Naive thymus-derived CD4-positive, alpha-beta T cell (primary cell): ENCODE measurements at regions of chr2 and their contacts with region 1.

Region 1: DNA sequence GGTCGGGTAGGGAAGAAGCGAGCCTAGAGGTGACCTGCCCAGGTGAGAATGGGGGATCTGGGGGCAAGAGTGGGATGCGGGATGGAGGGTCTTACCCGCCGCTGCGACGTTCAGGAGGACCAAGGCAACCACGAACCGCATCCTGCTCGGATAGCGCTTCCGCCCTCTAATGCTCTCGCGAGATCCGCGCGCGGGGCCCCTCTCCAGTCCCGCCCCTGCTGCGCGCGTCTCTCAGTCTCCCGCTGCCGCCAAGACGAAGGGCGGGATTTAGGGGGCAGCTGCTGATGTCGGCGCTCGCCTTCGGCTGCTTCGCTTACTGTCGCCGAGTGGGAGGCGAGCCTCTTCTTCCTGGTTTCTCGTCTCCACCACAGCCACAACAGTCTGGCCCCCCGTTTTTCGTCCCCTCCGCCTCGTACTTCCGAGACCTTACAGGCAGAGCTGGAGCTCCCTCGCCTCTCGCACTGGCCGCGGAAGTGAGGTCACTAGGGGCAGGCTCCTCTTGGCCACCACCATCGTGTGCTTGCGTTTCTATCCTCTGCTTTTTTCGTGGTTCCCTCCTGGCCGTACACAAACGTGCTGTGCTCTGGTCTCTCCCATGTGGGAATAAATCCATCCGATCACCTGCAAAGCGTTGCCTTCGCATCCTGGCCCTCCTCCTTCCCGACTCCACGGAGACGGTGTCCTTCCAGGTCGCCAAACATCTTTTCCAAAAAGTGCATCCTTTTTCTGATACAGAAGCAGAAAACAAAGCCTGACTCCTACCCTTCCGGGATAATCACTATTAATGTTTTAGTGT is at the start of gene TGOLN2:
- DNase-seq: peak; percentile 91 to 96 (median 95)
- ATAC-seq: peak; percentile 94
- H3K4me3 ChIP-seq: peak within 1 kb of the TSS; percentile 84
- H3K4me3 Mint-ChIP-seq: peak within 1 kb of the TSS; percentile 97 to 100 (median 99)
- H3K27ac ChIP-seq: peak within 1 kb of the TSS; percentile 92
- H3K27ac Mint-ChIP-seq: peak within 1 kb of the TSS; percentile 97 to 100 (median 99)
- H3K4me1 ChIP-seq: peaks cover 24 to 31% of the 10 kb centered on the region in 2 donors
- H3K4me1 Mint-ChIP-seq: peaks cover 31 to 51% (median 46%) of the 10 kb centered on the region in 7 donors
- H3K27me3 ChIP-seq: no peaks in the 10 kb centered on the region
- H3K27me3 Mint-ChIP-seq: no peaks in the 10 kb centered on the region
- total RNA-seq, gene TGOLN2: 144 to 200 (median 178) TPM

Region 2: DNA sequence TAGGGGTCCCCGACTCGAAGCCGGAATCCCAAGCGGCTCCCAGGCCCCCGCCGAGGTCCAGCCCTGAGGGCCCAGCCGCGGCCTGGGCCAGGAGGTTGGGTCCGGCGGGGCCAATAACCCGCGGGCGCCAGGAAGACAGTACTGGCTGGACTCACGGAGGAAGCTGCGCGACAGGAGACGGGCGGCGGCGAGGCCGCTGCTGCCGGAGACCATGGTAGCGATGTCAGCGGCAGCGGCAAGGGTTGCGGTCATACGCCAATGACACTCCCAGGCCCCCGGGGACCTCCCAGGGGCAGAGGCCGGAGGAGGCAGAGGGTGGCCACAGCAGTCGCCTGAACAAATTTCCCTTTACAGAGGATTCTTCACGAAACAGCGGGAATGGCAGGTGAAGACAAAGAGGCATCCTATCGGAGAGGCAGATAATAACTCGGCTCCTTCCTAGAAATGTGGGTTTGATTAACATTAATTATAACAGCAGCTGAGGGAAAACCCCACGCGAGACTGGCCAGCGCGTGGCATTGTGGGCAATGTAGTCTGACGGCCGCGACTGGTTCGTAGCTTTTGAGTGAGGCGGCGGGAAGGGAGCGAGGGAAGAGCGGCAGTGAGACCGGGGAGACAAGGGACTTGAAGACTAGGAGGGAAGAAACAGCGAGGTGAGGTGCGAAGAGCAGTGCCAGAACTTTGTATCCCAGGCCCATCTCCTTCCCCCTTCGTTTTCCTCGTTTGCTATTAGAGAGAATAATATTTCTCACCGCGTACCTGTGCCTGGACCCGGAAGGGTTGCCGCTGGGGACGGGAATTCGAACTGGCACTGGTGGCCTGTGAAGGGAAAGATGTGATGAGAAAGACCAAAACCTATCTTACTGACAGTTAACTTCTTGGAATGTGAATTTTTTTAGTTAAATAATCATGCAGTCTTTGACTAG is 868.7 kb before region 1 on chr2 and contains the start of gene SUCLG1:
- CTCF ChIA-PET with region 1: no interaction called
- POLR2A ChIA-PET with region 1: no interaction called
- intact Hi-C with region 1: loop called in 1 of 2 experiments (anchors 1 kb)
- DNase-seq: peak; percentile 72 to 88 (median 84)
- ATAC-seq: peak; percentile 98
- H3K4me3 ChIP-seq: peak within 1 kb of the TSS; percentile 69
- H3K4me3 Mint-ChIP-seq: peak within 1 kb of the TSS; percentile 90 to 100 (median 96)
- H3K27ac ChIP-seq: peak within 1 kb of the TSS; percentile 94
- H3K27ac Mint-ChIP-seq: peak within 1 kb of the TSS; percentile 91 to 99 (median 99)
- H3K4me1 ChIP-seq: peaks cover 9 to 24% of the 10 kb centered on the region in 2 donors
- H3K4me1 Mint-ChIP-seq: peaks cover 33 to 56% (median 50%) of the 10 kb centered on the region in 7 donors
- H3K27me3 ChIP-seq: no peaks in the 10 kb centered on the region
- H3K27me3 Mint-ChIP-seq: no peaks in the 10 kb centered on the region
- total RNA-seq, gene SUCLG1: 45.1 to 63.6 (median 47.9) TPM

Region 3: DNA sequence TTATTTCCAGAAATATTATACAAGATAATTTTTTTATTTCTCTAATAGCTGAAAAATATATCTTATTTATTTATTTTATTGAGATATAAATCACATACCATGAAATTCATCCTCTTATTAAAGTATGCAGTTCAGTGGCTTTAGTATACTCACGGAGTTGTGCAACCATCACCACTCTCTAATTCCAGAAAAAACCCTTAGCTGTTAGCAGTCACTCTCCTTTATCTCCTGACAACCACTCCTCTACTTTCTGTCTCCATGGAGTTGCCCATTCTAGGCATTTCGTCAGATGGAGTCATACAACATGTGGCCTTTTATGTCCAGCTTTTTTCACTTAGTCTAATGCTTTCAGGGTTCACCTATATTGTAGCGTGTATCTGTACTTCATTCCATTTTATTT is 128.3 kb before region 1 on chr2:
- CTCF ChIA-PET with region 1: no interaction called
- POLR2A ChIA-PET with region 1: no interaction called
- intact Hi-C with region 1: no loop called
- DNase-seq: no peak
- ATAC-seq: no peak
- H3K4me3 ChIP-seq: no peak overlapping the region
- H3K4me3 Mint-ChIP-seq: no peak overlapping the region
- H3K27ac ChIP-seq: no peak overlapping the region
- H3K27ac Mint-ChIP-seq: no peak overlapping the region
- H3K4me1 ChIP-seq: no peaks in the 10 kb centered on the region
- H3K4me1 Mint-ChIP-seq: no peaks in the 10 kb centered on the region
- H3K27me3 ChIP-seq: no peaks in the 10 kb centered on the region
- H3K27me3 Mint-ChIP-seq: peaks cover 0 to 15% (median 8%) of the 10 kb centered on the region in 5 donors

Region 4: DNA sequence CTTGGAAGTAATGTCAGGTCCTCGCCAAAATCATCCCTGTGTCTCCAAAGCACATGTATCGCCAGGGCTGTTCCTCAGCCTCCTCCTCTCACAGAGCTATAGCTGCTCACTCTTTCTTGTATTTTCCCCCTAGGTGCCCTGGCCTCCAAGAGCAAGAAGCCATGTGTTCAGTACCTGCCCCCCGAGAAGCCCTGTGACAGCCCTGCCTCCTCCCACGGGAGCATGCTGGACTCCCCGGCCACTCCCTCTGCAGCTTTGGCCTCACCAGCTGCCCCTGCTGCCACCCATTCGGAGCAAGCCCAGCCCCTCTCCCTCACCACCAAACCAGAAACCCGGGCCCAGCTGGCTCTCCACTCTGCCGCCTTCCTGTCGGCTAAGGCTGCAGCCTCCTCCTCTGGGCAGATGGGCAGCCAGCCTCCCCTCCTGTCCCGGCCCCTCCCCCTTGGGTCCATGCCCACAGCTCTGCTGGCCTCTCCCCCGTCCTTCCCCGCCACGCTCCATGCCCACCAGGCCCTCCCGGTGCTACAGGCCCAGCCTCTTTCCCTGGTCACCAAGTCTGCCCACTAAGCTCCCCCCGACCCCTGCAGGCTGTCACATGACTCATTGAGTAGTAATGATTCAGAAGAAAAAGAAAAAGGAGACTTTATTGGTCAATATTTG is 19.0 kb before region 1 on chr2:
- CTCF ChIA-PET with region 1: interaction called, 6 read pairs
- POLR2A ChIA-PET with region 1: interaction called, 220 read pairs
- intact Hi-C with region 1: loop called in 1 of 2 experiments (anchors 1 kb)
- DNase-seq: peak in 2 of 9 donors; percentile 16 to 18
- ATAC-seq: peak; percentile 8
- H3K4me3 ChIP-seq: peak overlapping the region; percentile 57
- H3K4me3 Mint-ChIP-seq: peak overlapping the region; percentile 23 to 93 (median 86)
- H3K27ac ChIP-seq: peak overlapping the region; percentile 67
- H3K27ac Mint-ChIP-seq: peak overlapping the region; percentile 43 to 98 (median 95)
- H3K4me1 ChIP-seq: peaks cover 11 to 31% of the 10 kb centered on the region in 2 donors
- H3K4me1 Mint-ChIP-seq: peaks cover 26 to 56% (median 48%) of the 10 kb centered on the region in 7 donors
- H3K27me3 ChIP-seq: no peaks in the 10 kb centered on the region
- H3K27me3 Mint-ChIP-seq: peaks cover 0 to 8% (median 0%) of the 10 kb centered on the region in 5 donors

Region 5: DNA sequence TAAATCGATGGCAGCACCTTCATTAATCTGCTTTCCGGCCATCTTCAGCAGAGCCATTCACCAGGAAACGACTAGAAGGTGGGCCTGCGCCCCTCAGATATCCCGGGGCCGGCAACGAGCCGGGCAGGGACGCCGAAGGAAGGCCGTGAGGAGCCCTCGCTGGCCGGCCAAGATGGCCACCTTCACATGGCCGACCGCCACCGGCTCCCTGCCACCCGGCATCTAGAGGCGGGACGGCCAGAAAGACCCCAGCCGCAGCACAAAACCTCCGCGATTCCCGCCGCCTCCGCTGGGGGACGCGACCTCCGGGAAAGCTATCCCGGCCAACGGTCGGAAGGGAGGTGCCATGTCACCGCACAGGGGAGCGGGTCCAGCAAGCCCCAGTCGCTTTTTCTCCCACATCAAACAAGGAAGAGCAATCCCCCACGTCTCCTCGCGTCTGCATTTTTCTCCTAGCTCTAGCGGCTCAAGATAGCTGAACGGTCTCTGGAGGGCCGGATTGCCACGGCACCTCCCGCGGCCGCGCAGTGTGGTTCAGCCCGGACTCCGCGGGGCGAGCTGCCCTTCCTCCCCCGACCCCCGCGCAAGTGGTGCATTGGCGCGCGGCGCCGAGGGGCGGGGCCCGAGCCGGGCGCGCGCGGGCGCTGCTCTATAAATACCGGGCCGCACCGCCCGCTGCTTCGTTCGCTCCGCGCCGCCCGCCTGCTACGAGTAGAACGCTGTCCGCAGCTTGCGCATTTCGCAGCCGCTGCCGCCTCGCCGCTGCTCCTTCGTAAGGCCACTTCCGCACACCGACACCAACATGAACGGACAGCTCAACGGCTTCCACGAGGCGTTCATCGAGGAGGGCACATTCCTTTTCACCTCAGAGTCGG is 210.7 kb after region 1 on chr2 and contains the start of gene MAT2A:
- CTCF ChIA-PET with region 1: interaction called, 3 read pairs
- POLR2A ChIA-PET with region 1: interaction called, 52 read pairs
- intact Hi-C with region 1: loop called (anchors 1 kb)
- DNase-seq: peak; percentile 72 to 96 (median 88)
- ATAC-seq: peak; percentile 87
- H3K4me3 ChIP-seq: peak within 1 kb of the TSS; percentile 92
- H3K4me3 Mint-ChIP-seq: peak within 1 kb of the TSS; percentile 91 to 98 (median 95)
- H3K27ac ChIP-seq: peak within 1 kb of the TSS; percentile 84
- H3K27ac Mint-ChIP-seq: peak within 1 kb of the TSS; percentile 90 to 97 (median 94)
- H3K4me1 ChIP-seq: peaks cover 19 to 27% of the 10 kb centered on the region in 2 donors
- H3K4me1 Mint-ChIP-seq: peaks cover 14 to 58% (median 47%) of the 10 kb centered on the region in 7 donors
- H3K27me3 ChIP-seq: no peaks in the 10 kb centered on the region
- H3K27me3 Mint-ChIP-seq: no peaks in the 10 kb centered on the region
- total RNA-seq, gene MAT2A: 96.3 to 268 (median 178) TPM

Region 6: DNA sequence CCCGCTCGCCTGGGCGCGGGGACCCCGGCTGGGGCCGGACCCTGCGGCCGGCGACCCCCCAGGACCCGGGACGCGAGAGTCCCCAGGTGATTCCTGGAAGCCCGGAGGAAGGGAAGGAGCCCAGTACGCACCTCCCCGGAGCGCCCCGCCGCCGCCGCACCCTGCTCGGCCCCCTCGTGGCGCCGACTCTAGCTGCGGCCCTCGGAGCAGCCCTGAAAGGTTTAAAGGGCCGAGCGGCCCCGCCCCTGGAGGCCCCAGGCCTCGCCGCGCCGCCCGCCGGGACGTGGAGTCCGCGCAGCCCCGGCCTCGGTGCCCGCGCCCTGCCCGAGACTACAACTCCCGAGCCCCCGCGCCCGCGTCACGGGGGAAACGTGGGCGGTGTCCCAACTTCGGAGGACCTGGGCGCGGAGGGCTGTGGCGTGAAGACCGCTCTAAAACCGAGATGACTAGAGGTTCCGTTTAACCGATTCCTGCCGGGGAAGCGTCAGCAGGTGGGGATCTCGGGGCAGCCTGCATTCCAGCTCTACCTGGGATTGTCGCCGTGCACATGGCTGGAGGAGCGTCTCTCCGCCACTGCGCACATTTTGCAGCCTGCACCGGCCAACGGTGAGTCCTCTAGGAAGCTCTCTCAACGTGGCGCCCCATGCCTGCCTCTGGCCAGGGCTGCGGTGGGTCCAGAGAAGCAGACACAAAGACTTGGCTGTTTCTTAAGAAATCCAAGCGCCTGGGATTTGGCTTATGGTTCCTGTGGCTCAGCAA is 274.6 kb after region 1 on chr2 and contains the start of gene TMEM150A:
- CTCF ChIA-PET with region 1: no interaction called
- POLR2A ChIA-PET with region 1: no interaction called
- intact Hi-C with region 1: loop called in 1 of 2 experiments (anchors 2 kb)
- DNase-seq: peak; percentile 68 to 91 (median 78)
- ATAC-seq: peak; percentile 97
- H3K4me3 ChIP-seq: peak within 1 kb of the TSS; percentile 99
- H3K4me3 Mint-ChIP-seq: peak within 1 kb of the TSS; percentile 89 to 98 (median 91)
- H3K27ac ChIP-seq: peak within 1 kb of the TSS; percentile 81
- H3K27ac Mint-ChIP-seq: peak within 1 kb of the TSS; percentile 42 to 96 (median 82)
- H3K4me1 ChIP-seq: peaks cover 7 to 9% of the 10 kb centered on the region in 2 donors
- H3K4me1 Mint-ChIP-seq: peaks cover 16 to 45% (median 37%) of the 10 kb centered on the region in 7 donors
- H3K27me3 ChIP-seq: no peaks in the 10 kb centered on the region
- H3K27me3 Mint-ChIP-seq: peaks cover 0 to 2% (median 0%) of the 10 kb centered on the region in 5 donors
- total RNA-seq, gene TMEM150A: 5.1 to 17.8 (median 11.2) TPM

Region 7: DNA sequence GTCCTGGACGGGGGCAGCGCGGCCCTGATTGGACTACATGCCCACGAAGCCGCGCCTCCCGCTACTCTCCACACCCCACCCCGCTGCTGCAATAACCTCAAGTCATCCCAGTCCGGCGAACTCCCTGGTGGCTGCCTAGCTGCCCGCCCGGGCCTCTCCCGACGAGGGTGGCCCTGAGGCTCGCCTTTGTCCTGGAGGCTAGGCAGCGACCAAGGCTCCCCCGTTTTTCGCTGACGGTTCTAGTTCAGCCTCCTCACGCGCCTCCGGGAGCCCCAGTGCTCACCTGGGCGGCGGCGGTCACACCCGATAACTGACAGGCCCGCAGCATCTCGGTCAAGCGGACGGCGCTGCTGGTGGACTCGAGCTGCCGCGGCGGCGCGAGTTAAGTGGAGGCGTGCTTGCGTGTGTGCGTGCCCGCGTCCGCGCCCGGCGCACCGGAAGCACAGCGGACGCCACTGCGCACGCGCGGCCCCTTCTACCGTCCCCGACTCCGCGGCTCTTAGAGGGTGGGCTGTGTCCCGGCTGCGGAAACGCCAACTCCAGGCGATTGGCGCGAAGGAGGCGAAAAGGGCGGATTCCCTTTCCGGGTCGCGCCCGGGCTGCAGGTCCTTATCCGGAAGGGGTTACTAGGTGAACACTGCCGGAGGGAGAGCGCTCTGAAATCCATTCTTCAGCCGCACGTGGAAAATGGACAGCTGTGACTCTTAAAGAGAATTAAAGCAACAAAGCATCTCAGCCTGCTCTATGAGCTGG is 867.2 kb after region 1 on chr2 and contains the start of gene IMMT:
- CTCF ChIA-PET with region 1: no interaction called
- POLR2A ChIA-PET with region 1: no interaction called
- intact Hi-C with region 1: loop called in 1 of 2 experiments (anchors 1 kb)
- DNase-seq: peak; percentile 86 to 96 (median 94)
- ATAC-seq: peak; percentile 94
- H3K4me3 ChIP-seq: peak within 1 kb of the TSS; percentile 74
- H3K4me3 Mint-ChIP-seq: peak within 1 kb of the TSS; percentile 86 to 99 (median 95)
- H3K27ac ChIP-seq: peak within 1 kb of the TSS; percentile 97
- H3K27ac Mint-ChIP-seq: peak within 1 kb of the TSS; percentile 82 to 97 (median 90)
- H3K4me1 ChIP-seq: peaks cover 15 to 23% of the 10 kb centered on the region in 2 donors
- H3K4me1 Mint-ChIP-seq: peaks cover 35 to 74% (median 60%) of the 10 kb centered on the region in 7 donors
- H3K27me3 ChIP-seq: no peaks in the 10 kb centered on the region
- H3K27me3 Mint-ChIP-seq: no peaks in the 10 kb centered on the region
- total RNA-seq, gene IMMT: 59.2 to 164 (median 77.0) TPM